HEK293 (cell line): ENCODE measurements at regions of chr3 and their contacts with region 1.

Region 1: GRCh38 chr3:146189519-146190173 is 28.7 kb upstream of the PLOD2 start:
- H3K4me3 ChIP-seq: no peak overlapping the region
- H3K27ac ChIP-seq: no peak overlapping the region
- H3K4me1 ChIP-seq: no peaks in the 10 kb centered on the region
- CTCF ChIP-seq: no peak

Region 2: GRCh38 chr3:146065573-146066006 is 124.1 kb before region 1 on chr3:
- CTCF ChIA-PET with region 1: interaction called, 86 read pairs
- POLR2A ChIA-PET with region 1: no interaction called
- H3K4me3 ChIP-seq: no peak overlapping the region
- H3K27ac ChIP-seq: no peak overlapping the region
- H3K4me1 ChIP-seq: no peaks in the 10 kb centered on the region
- CTCF ChIP-seq: no peak

Region 3: DNA sequence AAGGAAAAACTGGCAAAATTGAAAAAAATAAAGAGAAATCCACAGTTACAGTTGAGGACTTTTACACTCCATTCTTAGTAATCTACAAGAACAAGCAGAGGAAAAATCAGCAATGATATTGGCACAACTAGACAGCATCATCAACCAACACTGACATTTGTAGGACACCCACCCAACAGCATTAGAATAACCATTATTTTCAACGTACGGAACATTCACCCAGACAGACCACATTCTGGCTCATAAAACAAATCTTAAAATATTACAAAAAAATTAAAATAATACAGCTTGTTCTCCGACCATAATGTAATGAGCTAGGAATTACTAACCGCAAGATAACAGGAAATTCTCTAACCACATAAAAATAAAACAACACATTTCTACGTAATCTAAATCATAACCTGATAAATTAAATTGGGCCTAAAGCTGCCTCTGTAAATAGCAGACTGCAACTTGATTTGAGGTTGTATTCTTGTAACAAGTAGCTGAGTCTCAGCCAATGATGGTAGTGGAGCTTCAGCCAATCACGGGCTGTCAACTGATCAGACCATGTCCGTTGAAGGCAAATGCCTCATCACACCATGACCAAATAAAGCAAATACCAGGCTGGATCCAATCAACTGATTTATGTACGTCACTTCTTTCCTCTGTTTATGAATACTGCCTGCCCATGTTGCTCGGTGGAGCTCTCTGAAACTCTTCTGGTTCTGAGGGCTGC is 52.0 kb after region 1 on chr3:
- CTCF ChIA-PET with region 1: no interaction called
- POLR2A ChIA-PET with region 1: no interaction called
- H3K4me3 ChIP-seq: no peak overlapping the region
- H3K27ac ChIP-seq: no peak overlapping the region
- H3K4me1 ChIP-seq: no peaks in the 10 kb centered on the region
- CTCF ChIP-seq: no peak

Region 4: GRCh38 chr3:146326670-146327543 is 137.3 kb after region 1 on chr3:
- CTCF ChIA-PET with region 1: interaction called, 55 read pairs
- POLR2A ChIA-PET with region 1: interaction called, 5 read pairs
- H3K4me3 ChIP-seq: no peak overlapping the region
- H3K27ac ChIP-seq: no peak overlapping the region
- H3K4me1 ChIP-seq: no peaks in the 10 kb centered on the region
- CTCF ChIP-seq: peak; percentile 25; the same call in 1 of the 2 replicates

Region 5: GRCh38 chr3:146577662-146578061 is 388.0 kb after region 1 on chr3:
- CTCF ChIA-PET with region 1: interaction called, 13 read pairs
- POLR2A ChIA-PET with region 1: no interaction called
- H3K4me3 ChIP-seq: no peak overlapping the region
- H3K27ac ChIP-seq: no peak overlapping the region
- H3K4me1 ChIP-seq: no peaks in the 10 kb centered on the region
- CTCF ChIP-seq: no peak

Region 6: GRCh38 chr3:146640955-146641867 is 451.6 kb after region 1 on chr3:
- CTCF ChIA-PET with region 1: interaction called, 11 read pairs
- POLR2A ChIA-PET with region 1: no interaction called
- H3K4me3 ChIP-seq: no peak overlapping the region
- H3K27ac ChIP-seq: no peak overlapping the region
- H3K4me1 ChIP-seq: no peaks in the 10 kb centered on the region
- CTCF ChIP-seq: no peak

Region 7: DNA sequence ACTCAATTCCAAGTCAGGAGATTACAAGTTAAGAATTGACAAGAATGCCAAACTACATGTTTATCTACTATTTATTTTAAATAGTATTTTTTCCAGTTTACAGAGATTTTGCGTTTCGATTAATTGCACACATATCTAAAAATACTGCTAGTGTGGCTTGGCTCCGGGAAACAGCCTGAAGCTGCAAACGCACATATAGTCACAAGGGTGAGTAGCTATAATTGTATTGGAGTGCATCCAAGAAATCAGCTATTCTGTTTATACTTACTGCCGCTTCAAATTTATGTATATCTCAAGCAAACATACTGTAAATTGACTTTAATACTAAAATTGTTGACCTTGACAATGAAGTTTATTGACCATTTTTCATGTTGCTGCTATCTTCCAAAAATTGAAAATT is 492.5 kb after region 1 on chr3:
- CTCF ChIA-PET with region 1: no interaction called
- POLR2A ChIA-PET with region 1: no interaction called
- H3K4me3 ChIP-seq: no peak overlapping the region
- H3K27ac ChIP-seq: no peak overlapping the region
- H3K4me1 ChIP-seq: 0 out of 2 replicates have a peak, but pooled peaks cover 3% of the 10 kb centered on the region
- CTCF ChIP-seq: no peak